T-cell (primary cell): ENCODE measurements at regions of chr9 and their contacts with region 1.

Region 1: DNA sequence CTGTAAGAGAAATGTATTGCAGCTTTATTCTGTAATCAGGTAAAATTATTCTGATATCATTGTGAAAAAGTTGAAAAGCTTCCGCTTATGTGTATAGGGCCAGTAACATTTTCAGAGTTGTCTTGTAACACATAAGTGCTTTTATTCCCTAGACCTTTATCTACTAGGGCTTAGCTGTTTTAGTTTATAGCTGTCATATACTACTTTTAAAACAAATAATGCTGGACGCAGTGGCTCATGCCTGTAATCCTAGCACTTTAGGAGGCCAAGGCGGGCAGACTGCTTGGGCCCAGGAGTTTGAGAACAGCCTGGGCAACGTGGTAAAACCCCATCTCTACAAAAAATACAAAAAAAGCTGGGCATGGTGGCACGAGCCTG is 33.1 kb downstream of the SLC25A51 start:
- DNase-seq: no peak
- ATAC-seq: no peak
- H3K4me3 ChIP-seq: no peak overlapping the region
- H3K4me3 Mint-ChIP-seq: no peak overlapping the region
- H3K27ac ChIP-seq: no peak overlapping the region
- H3K27ac Mint-ChIP-seq: no peak overlapping the region
- H3K4me1 ChIP-seq: no peaks in the 10 kb centered on the region
- H3K4me1 Mint-ChIP-seq: no peaks in the 10 kb centered on the region
- H3K27me3 ChIP-seq: no peaks in the 10 kb centered on the region
- H3K27me3 Mint-ChIP-seq: no peaks in the 10 kb centered on the region

Region 2: GRCh38 chr9:37608250-37608649 is 262.5 kb before region 1 on chr9:
- CTCF ChIA-PET with region 1: no interaction called
- POLR2A ChIA-PET with region 1: interaction called in 1 of 2 experiments, 14 read pairs
- DNase-seq: no peak
- ATAC-seq: no peak
- H3K4me3 ChIP-seq: no peak overlapping the region
- H3K4me3 Mint-ChIP-seq: no peak overlapping the region
- H3K27ac ChIP-seq: no peak overlapping the region
- H3K27ac Mint-ChIP-seq: no peak overlapping the region
- H3K4me1 ChIP-seq: no peaks in the 10 kb centered on the region
- H3K4me1 Mint-ChIP-seq: no peaks in the 10 kb centered on the region
- H3K27me3 ChIP-seq: peaks cover 0 to 10% of the 10 kb centered on the region in 2 experiments
- H3K27me3 Mint-ChIP-seq: peaks cover 18% of the 10 kb centered on the region in 2 donors

Region 3: DNA sequence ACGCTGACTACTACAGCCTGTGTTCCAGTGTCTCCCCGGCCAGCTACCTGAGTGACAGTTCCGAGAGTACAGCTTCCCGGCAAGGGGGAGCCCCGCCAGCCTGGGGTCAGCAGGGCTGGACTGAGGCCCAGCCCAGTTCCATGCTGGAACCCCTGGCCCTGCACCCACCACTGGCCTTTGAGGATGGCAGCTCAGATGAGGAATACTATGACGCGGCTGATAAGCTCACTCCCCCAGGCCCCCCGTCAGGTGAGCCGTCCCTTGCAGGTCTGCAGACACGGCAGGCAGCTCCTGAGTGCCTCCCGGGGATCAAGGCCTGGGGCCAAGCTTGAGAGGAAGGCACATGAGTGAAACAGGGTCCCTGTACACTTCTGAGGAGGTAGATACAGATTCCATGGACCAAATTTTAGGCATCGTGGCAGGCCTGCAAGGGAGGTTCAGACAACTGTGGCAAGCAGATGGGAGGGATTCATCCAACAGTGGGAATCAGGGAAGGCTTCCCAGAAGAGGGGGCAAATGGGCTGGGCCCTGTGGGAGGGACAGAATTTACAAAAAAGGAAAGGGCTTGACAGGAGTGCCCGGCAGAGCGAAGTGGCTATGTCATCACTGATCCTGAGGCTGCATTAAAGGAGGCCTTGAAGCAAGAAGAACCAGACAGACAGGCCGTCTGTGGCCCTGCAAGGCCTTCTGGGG is 130.0 kb before region 1 on chr9:
- CTCF ChIA-PET with region 1: no interaction called
- POLR2A ChIA-PET with region 1: no interaction called
- DNase-seq: no peak
- ATAC-seq: no peak
- H3K4me3 ChIP-seq: no peak overlapping the region
- H3K4me3 Mint-ChIP-seq: no peak overlapping the region
- H3K27ac ChIP-seq: no peak overlapping the region
- H3K27ac Mint-ChIP-seq: no peak overlapping the region
- H3K4me1 ChIP-seq: no peaks in the 10 kb centered on the region
- H3K4me1 Mint-ChIP-seq: no peaks in the 10 kb centered on the region
- H3K27me3 ChIP-seq: peaks cover 0 to 16% of the 10 kb centered on the region in 2 experiments
- H3K27me3 Mint-ChIP-seq: peaks cover 0 to 11% of the 10 kb centered on the region in 2 donors

Region 4: DNA sequence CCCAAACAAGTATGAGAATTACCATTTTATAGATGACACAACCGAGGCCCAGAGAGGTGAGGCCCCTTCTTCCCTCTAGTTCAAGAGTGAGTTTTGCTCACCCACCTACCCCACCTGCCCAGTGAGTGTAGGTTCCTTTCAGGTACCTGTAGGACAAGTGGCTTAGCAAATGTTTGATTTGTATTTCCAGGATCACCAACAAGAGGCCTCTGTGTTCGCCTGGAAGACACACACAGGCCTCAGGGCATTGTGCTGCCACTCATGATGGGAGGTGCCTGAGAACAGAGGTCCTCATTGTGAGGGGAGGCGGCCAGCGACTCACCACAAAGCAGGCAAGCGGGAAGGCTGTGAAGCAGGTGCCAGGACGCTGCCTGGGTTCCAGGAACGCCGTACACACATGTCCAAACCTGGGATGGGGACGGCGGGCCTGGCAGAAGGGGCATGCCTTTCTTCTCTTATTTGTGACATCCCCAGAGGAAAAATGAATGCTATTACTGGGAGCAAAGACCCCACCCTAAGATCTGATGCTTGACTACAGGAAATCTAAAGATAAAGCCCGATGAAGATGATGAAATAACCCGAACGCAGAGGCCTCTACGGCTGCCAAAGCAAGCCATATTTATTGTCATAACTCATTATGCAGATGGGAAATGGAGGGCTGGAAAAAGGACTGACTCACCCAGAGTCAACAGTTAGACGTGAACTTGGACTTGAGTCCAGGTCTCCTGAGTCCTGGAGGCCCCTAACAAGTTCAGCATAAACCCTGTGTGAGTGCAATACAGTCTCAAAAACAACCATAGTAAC is 93.3 kb after region 1 on chr9:
- CTCF ChIA-PET with region 1: no interaction called
- POLR2A ChIA-PET with region 1: no interaction called
- DNase-seq: no peak
- ATAC-seq: no peak
- H3K4me3 ChIP-seq: no peak overlapping the region
- H3K4me3 Mint-ChIP-seq: no peak overlapping the region
- H3K27ac ChIP-seq: no peak overlapping the region
- H3K27ac Mint-ChIP-seq: no peak overlapping the region
- H3K4me1 ChIP-seq: no peaks in the 10 kb centered on the region
- H3K4me1 Mint-ChIP-seq: no peaks in the 10 kb centered on the region
- H3K27me3 ChIP-seq: no peaks in the 10 kb centered on the region
- H3K27me3 Mint-ChIP-seq: no peaks in the 10 kb centered on the region